Psoas muscle (tissue), 8 donors: ENCODE measurements at regions of chr2 and their contacts with region 1.

Region 1: GRCh38 chr2:219352448-219353023 is 20.0 kb upstream of the RESP18 start:
- DNase-seq: peak in 1 of 2 donors; percentile 26
- ATAC-seq: peak in 2 of 4 donors; percentile 52 to 58
- H3K4me3 ChIP-seq: no peak overlapping the region
- H3K27ac ChIP-seq: no peak overlapping the region
- H3K4me1 ChIP-seq: no peaks in the 10 kb centered on the region
- H3K27me3 ChIP-seq: peaks cover 0 to 26% (median 4%) of the 10 kb centered on the region in 3 donors
- CTCF ChIP-seq: peak; percentile 30

Region 2: GRCh38 chr2:219253753-219254590 is 98.6 kb before region 1 on chr2 and contains the start of gene TUBA4A:
- intact Hi-C with region 1: no loop called
- DNase-seq: peak; percentile 90 to 92
- ATAC-seq: peak; percentile 77 to 85 (median 80)
- H3K4me3 ChIP-seq: peak within 1 kb of the TSS; percentile 75
- H3K27ac ChIP-seq: peak within 1 kb of the TSS; percentile 94
- H3K4me1 ChIP-seq: peaks cover 33% of the 10 kb centered on the region
- H3K27me3 ChIP-seq: no peaks in the 10 kb centered on the region
- CTCF ChIP-seq: peak; percentile 18
- total RNA-seq, gene TUBA4A: 522 to 707 (median 613) TPM

Region 3: GRCh38 chr2:219300022-219300421 is 52.5 kb before region 1 on chr2:
- intact Hi-C with region 1: loop called in 1 of 2 experiments (anchors 5 kb)
- DNase-seq: no peak
- ATAC-seq: no peak
- H3K4me3 ChIP-seq: no peak overlapping the region
- H3K27ac ChIP-seq: no peak overlapping the region
- H3K4me1 ChIP-seq: peaks cover 4% of the 10 kb centered on the region
- H3K27me3 ChIP-seq: peaks cover 0 to 28% (median 6%) of the 10 kb centered on the region in 3 donors
- CTCF ChIP-seq: no peak

Region 4: GRCh38 chr2:219368690-219369195 is 16.2 kb after region 1 on chr2:
- intact Hi-C with region 1: no loop called
- DNase-seq: no peak
- ATAC-seq: peak in 3 of 4 donors; percentile 15 to 55 (median 27)
- H3K4me3 ChIP-seq: no peak overlapping the region
- H3K27ac ChIP-seq: no peak overlapping the region
- H3K4me1 ChIP-seq: no peaks in the 10 kb centered on the region
- H3K27me3 ChIP-seq: no peaks in the 10 kb centered on the region
- CTCF ChIP-seq: no peak

Region 5: GRCh38 chr2:219783359-219783975 is 430.9 kb after region 1 on chr2:
- intact Hi-C with region 1: no loop called
- DNase-seq: no peak
- ATAC-seq: no peak
- H3K4me3 ChIP-seq: no peak overlapping the region
- H3K27ac ChIP-seq: no peak overlapping the region
- H3K4me1 ChIP-seq: no peaks in the 10 kb centered on the region
- H3K27me3 ChIP-seq: no peaks in the 10 kb centered on the region
- CTCF ChIP-seq: no peak